Upper lobe of right lung (tissue), 1 donor: ENCODE measurements at regions of chr12 and their contacts with region 1.

Region 1: GRCh38 chr12:43038991-43039390 is 449.4 kb upstream of the PRICKLE1 start:
- DNase-seq: no peak
- ATAC-seq: no peak
- H3K4me3 ChIP-seq: no peak overlapping the region
- H3K27ac ChIP-seq: no peak overlapping the region
- H3K4me1 ChIP-seq: no peaks in the 10 kb centered on the region
- H3K27me3 ChIP-seq: no peaks in the 10 kb centered on the region
- CTCF ChIP-seq: no peak

Region 2: DNA sequence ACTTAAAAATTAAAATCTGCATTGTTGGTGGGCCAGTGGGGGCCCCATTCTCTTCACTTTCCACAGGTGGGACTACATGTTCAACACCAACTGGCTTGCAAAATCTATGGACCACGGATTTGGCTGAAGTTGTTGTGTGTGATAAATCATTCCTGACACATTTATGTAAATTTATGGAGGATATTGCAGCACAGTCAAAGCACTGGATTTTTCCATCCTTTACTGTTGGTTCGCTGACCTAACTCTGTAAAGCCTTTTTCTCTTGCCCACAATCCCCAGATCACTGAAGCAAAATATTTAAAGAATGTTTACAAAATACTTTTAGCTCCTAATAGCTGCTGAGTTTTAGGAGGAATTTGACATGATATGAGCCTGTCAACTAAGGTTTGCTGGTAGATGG is 229.8 kb before region 1 on chr12:
- intact Hi-C with region 1: no loop called
- DNase-seq: no peak
- ATAC-seq: no peak
- H3K4me3 ChIP-seq: no peak overlapping the region
- H3K27ac ChIP-seq: no peak overlapping the region
- H3K4me1 ChIP-seq: no peaks in the 10 kb centered on the region
- H3K27me3 ChIP-seq: no peaks in the 10 kb centered on the region
- CTCF ChIP-seq: no peak

Region 3: DNA sequence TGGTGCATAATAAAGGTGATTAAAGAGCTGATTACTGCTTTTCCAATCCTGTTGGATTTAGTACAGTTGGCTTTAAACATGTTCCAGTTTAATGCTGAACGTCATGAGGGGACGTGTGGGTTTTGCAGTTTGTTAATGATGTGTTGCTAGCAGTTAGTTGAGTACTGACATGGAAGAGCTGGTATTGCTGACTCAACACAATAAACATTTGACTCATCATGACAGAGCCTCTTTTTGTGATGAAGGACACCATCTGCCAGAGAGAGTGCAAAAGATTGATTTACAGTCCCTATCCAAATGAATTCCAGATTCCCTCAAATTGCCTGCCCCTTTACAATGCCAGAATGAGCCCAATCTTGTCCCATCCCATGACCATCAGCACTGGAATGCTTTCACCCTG is 103.2 kb before region 1 on chr12:
- intact Hi-C with region 1: no loop called
- DNase-seq: no peak
- ATAC-seq: no peak
- H3K4me3 ChIP-seq: no peak overlapping the region
- H3K27ac ChIP-seq: no peak overlapping the region
- H3K4me1 ChIP-seq: no peaks in the 10 kb centered on the region
- H3K27me3 ChIP-seq: no peaks in the 10 kb centered on the region
- CTCF ChIP-seq: no peak

Region 4: DNA sequence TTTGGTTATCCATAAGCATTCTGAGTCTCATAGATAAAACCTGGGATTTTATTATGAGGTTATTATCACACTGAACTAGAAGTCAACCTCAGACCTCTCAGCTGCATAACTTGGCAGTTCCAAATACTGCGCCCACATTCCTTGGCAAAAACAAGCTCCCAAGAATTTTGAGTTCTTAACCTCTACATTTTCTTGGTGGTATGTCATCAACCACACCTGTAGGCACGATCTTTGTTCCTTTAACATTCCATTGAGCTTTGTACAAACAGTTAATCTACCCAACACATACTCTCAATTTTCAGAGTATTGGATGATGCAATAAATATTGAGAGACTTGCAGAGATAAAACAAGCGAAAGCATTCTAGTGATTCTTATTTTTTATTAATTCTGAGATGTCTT is 77.6 kb before region 1 on chr12:
- intact Hi-C with region 1: loop called (anchors 5 kb)
- DNase-seq: no peak
- ATAC-seq: peak; percentile 94
- H3K4me3 ChIP-seq: no peak overlapping the region
- H3K27ac ChIP-seq: no peak overlapping the region
- H3K4me1 ChIP-seq: peaks cover 16% of the 10 kb centered on the region
- H3K27me3 ChIP-seq: no peaks in the 10 kb centered on the region
- CTCF ChIP-seq: no peak

Region 5: DNA sequence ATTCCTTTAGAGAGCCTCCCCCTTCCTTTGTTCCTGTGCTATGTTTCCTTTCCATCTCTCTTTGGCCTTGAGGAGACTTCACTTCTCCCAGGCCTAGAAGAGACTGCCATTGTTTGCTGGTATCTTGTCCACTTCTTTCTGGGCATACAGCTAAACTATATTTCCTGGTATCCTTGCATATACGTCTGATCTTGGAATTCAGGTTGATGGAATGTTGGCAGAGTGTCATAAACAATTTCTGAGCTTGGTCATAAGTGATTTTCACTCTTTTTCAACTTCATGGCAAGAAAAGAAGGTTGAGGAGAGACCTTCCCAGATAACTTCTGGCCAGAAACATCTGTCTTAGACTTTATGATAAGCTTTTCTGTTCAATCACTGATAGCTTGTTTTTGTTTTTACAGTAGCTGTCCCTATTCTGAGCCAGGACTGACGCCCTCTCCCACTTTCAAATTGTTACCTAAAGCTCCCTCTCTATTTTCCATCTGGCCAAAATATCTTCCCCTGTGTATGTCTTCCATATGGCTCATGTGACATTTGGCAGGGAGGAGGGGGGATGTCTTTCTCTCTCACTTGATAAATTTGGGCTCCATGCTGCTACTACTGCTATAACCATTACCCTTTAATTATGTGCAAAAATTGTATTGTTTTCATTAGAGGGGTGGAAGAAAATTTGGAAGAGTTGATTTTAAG is 56.0 kb after region 1 on chr12:
- intact Hi-C with region 1: no loop called
- DNase-seq: no peak
- ATAC-seq: no peak
- H3K4me3 ChIP-seq: no peak overlapping the region
- H3K27ac ChIP-seq: no peak overlapping the region
- H3K4me1 ChIP-seq: no peaks in the 10 kb centered on the region
- H3K27me3 ChIP-seq: no peaks in the 10 kb centered on the region
- CTCF ChIP-seq: no peak